Activated T-helper 1 cell treated with anti-CD3 and anti-CD28 coated beads, Interleukin-12 subunit alpha, Interleukin-12 subunit beta, Interleukin-2, Interleukin-4 antibody, amounts not matched to agents 30 ng/mL and 10 ng/mL and 1 ng/mL, durations not matched to agents 14 hours and 24 hours and 36 hours (primary cell): ENCODE measurements at regions of chr2 and their contacts with region 1.

Region 1: DNA sequence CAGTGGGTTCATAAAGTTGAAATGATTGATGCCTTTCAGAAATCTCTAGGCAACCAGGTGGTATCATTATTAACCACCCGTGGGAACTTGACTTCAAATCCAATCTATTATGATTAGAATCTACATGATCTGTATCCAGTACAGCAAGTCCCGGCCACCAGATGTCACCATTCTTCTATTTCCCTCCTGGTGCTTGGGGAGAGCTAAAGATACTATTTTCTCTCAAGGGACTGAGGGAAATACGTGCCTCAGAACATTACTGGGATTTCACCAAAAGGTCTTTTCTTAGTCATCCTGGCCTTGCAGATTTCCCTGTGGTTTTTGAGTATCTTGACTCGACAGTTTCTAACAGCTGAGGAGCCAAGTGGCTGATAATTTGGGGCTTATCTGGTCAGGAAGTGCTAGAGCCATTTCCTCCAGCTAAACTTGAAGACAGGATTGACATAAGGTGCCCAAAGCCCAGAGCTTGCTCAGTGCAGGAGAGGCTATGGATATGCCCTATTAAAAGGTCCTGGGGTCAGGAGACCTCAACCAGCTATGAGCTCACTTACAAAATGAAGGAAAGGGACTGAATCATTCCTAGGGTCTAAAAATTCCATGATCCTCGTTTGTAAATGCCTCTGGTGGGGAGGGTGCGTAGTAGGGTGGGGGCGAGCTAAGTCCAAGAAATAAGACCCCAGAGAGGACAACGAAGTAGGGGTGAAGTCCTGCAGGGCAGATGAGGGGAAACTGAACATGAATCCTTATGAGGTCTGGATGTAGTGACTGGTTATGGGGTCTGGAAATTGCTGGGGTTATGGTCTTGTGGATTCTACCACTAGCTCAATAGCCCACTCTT is 135.4 kb upstream of the MGAT5 start:
- DNase-seq: peak; percentile 69
- H3K4me3 Mint-ChIP-seq: peak overlapping the region; percentile 99
- H3K27ac Mint-ChIP-seq: peak overlapping the region; percentile 16
- H3K4me1 Mint-ChIP-seq: peaks cover 28% of the 10 kb centered on the region
- H3K27me3 Mint-ChIP-seq: peaks cover 29% of the 10 kb centered on the region

Region 2: DNA sequence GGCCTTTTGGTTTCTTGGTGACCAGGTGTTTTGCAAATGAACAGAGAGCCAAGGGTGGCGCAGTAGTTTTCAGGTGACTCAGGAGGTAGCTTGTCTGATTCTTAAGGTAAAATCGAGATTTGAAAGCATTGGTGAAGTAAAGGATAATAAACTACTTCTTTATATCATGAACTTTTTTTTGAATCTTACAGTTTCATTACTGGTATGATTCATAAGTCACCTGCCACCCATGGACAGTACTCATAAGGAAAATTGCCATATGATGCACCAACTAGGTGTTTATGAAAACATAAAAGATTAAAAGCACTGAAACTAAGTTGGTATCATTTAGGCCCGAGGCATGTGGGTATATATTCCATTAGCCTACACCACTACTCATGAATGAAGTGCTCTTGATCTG is 51.3 kb after region 1 on chr2:
- intact Hi-C with region 1: loop called (anchors 1 kb)
- DNase-seq: no peak
- H3K4me3 Mint-ChIP-seq: no peak overlapping the region
- H3K27ac Mint-ChIP-seq: peak overlapping the region; percentile 47
- H3K4me1 Mint-ChIP-seq: peaks cover 17% of the 10 kb centered on the region
- H3K27me3 Mint-ChIP-seq: no peaks in the 10 kb centered on the region

Region 3: DNA sequence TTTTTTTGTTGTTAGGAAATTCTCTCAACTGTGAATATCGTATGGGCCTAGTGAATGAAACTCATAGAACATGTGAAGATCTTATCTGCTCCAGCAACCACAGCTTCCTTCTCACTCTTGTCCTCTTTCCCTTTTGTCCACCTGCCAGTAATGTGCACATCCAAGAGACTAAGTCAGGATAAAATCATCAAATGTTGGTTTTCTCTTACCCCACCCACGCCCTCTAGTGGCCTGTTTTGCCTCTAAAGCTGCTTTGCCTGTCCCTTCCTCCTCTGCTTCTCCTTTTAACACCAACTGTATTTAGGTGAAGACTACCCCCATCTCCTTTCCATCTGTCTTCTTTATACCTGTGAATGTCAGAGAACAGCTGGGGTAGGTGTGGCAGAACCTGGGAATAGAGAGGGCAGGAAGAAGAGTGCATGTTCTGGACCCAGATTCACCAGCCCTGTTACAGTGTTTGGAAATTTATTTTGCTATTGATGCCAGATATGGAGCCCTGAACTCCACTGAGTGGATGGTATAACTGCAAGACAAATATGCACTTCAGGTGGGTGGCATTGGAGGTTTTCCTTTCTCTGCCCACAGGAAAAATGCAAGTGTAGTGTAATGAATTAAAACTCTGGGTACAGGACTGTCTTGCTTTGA is 127.0 kb after region 1 on chr2:
- intact Hi-C with region 1: loop called (anchors 1 kb)
- DNase-seq: peak; percentile 54
- H3K4me3 Mint-ChIP-seq: no peak overlapping the region
- H3K27ac Mint-ChIP-seq: no peak overlapping the region
- H3K4me1 Mint-ChIP-seq: peaks cover 51% of the 10 kb centered on the region
- H3K27me3 Mint-ChIP-seq: peaks cover 12% of the 10 kb centered on the region

Region 4: GRCh38 chr2:134324947-134325346 is 206.4 kb after region 1 on chr2:
- intact Hi-C with region 1: loop called (anchors 1 kb)
- DNase-seq: no peak
- H3K4me3 Mint-ChIP-seq: no peak overlapping the region
- H3K27ac Mint-ChIP-seq: peak overlapping the region; percentile 6
- H3K4me1 Mint-ChIP-seq: peaks cover 66% of the 10 kb centered on the region
- H3K27me3 Mint-ChIP-seq: no peaks in the 10 kb centered on the region

Region 5: GRCh38 chr2:134683561-134684112 is 565.1 kb after region 1 on chr2:
- intact Hi-C with region 1: loop called (anchors 5 kb)
- DNase-seq: no peak
- H3K4me3 Mint-ChIP-seq: no peak overlapping the region
- H3K27ac Mint-ChIP-seq: no peak overlapping the region
- H3K4me1 Mint-ChIP-seq: peaks cover 53% of the 10 kb centered on the region
- H3K27me3 Mint-ChIP-seq: peaks cover 12% of the 10 kb centered on the region

Region 6: DNA sequence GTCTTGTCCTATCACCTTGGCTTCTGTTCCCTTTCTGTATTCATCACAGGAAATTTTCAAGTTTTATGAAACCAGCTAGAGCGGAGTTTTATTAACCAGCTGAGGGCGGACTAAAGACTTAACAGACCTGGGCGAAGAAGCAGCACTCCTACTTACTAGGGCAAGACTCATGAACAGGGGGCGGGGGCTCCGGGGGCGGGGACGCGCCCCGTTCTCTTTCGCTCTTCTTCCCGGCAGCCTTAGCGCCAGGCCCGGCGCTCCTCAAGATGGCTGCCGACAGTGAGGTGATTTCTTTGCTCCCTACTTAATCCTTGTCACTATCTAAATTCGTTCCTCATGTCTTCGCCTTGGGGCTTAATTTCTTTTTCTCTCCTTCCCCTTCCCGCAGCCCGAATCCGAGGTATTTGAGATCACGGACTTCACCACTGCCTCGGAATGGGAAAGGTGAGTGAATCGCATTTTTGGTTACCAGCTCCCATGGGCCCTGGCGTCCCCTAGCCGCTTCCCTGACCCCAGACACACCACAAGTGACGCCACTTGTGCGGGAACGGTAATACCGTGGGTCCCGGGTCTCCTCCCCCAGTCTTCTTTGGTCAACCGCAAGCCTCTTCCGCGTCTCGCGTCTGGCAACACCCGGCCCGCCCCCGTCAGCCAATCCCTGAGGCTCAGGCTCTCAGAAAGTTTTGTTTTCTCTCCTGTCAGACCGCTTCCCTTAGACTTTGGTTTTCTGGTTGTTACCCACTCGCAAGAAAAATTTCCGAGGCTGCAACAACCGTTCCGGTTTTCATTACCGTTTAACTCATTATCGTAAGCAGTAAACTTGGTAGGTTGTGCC is 933.8 kb after region 1 on chr2 and contains the start of gene RAB3GAP1:
- intact Hi-C with region 1: loop called (anchors 1 kb)
- DNase-seq: peak; percentile 94
- H3K4me3 Mint-ChIP-seq: peak within 1 kb of the TSS; percentile 92
- H3K27ac Mint-ChIP-seq: peak within 1 kb of the TSS; percentile 99
- H3K4me1 Mint-ChIP-seq: peaks cover 54% of the 10 kb centered on the region
- H3K27me3 Mint-ChIP-seq: peaks cover 1% of the 10 kb centered on the region
- total RNA-seq, gene RAB3GAP1: 23.4 and 25.6 TPM in 2 replicates